PC-9 (cell line): ENCODE measurements at regions of chr16 and their contacts with region 1.

Region 1: DNA sequence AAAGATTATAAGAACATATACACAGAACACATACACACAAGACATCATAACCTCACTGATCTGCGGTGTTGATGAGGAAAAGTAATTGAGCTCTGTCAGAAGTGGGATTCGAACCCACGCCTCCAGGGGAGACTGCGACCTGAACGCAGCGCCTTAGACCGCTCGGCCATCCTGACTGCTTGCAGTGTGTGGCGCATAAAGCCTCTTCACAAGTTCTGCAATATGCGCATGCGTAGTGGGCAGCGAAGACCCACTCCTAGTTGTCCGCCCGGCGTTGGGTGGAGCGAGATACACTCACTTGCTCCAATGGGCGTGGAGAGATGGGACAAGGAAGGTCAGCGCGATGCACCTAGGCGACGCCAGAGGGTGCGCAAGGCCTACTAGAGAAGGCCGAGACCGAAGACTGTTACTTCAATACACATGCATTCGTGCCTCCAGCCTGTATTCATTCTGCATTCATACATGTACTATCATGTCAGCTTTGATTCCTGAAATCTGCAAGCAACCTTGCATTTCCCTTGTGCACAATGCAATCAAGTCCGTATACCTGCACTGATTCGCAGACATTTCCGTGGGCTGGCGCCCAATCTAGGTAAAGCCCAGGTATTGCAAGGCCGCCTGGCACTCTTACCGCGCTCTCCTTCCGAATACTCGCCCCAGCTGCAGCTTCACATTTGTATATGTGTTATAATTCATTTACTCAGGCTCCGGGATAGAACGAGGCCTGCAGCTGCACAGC is 16.1 kb upstream of the PLLP start:
- DNase-seq: peak; percentile 96 to 98
- H3K4me3 ChIP-seq: peak overlapping the region; percentile 64; the same call in 1 of the 2 replicates
- H3K27ac ChIP-seq: peak overlapping the region; percentile 67
- H3K4me1 ChIP-seq: peaks cover 31% of the 10 kb centered on the region
- H3K27me3 ChIP-seq: no peaks in the 10 kb centered on the region
- CTCF ChIP-seq: peak; percentile 92

Region 2: GRCh38 chr16:56576585-56577293 is 723.8 kb before region 1 on chr16:
- CTCF ChIA-PET with region 1: no interaction called
- POLR2A ChIA-PET with region 1: no interaction called
- intact Hi-C with region 1: loop called (anchors 5 kb)
- DNase-seq: peak; percentile 92 to 95
- H3K4me3 ChIP-seq: no peak overlapping the region
- H3K27ac ChIP-seq: peak overlapping the region; percentile 75
- H3K4me1 ChIP-seq: peaks cover 14% of the 10 kb centered on the region
- H3K27me3 ChIP-seq: no peaks in the 10 kb centered on the region
- CTCF ChIP-seq: peak; percentile 91

Region 3: GRCh38 chr16:56824331-56824730 is 476.2 kb before region 1 on chr16:
- CTCF ChIA-PET with region 1: no interaction called
- POLR2A ChIA-PET with region 1: no interaction called
- intact Hi-C with region 1: no loop called
- DNase-seq: no peak
- H3K4me3 ChIP-seq: no peak overlapping the region
- H3K27ac ChIP-seq: no peak overlapping the region
- H3K4me1 ChIP-seq: no peaks in the 10 kb centered on the region
- H3K27me3 ChIP-seq: no peaks in the 10 kb centered on the region
- CTCF ChIP-seq: no peak

Region 4: DNA sequence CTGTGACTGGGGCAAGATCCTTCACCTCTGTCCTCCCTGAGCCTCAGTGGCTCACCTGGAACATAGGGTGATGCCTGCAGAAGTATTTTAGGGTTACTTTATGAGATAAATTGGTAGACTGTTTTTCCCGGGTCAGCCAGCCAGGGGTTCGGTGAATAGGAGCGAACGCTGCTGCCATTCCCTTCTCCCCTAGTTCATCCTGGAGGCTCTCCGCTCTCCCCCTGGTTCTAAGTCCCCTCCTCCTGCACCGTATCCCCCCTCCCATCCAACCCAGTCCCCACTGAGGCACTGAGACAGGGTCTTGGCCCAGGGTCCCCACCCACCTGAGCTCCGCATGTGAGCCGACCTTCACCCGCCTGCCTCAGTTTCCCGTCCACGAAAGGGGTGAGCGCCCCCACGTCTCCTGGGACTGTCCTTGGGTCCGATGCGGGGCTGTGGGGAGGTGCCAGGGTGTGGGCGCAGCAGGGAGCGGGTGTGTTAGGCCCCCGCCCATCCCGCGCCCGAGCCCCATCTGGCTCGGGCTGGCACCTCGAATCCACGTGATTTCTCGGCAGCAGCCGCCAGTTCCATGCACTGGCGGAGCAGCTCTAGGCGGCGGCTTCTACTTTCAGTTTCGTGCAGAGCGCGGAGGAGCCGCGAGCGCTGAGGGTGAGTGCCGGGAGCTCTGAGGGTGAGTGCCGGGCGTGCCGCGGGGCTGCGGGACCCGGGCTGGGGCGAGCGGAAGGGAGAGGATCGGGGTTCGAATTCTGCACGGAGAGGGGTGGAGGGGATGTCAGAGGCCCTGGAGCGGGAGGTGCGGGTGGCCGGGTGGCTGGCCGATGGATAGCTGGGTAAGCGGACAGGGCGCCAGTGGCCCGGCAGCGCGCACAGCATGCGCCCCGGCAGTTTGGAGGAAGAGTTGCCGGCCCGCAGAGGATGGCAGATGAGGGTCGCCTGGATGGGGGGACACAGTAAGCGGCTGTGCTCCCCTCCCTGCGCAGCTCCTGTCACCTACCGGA is 311.3 kb before region 1 on chr16 and contains the start of gene NLRC5:
- CTCF ChIA-PET with region 1: no interaction called
- POLR2A ChIA-PET with region 1: no interaction called
- intact Hi-C with region 1: loop called (anchors 10 kb)
- DNase-seq: peak; percentile 74 to 76
- H3K4me3 ChIP-seq: peak within 1 kb of the TSS; percentile 66
- H3K27ac ChIP-seq: no peak within 1 kb of the TSS
- H3K4me1 ChIP-seq: peaks cover 30% of the 10 kb centered on the region
- H3K27me3 ChIP-seq: no peaks in the 10 kb centered on the region
- CTCF ChIP-seq: no peak
- total RNA-seq, gene NLRC5: 21.9 and 29.7 TPM in 2 replicates

Region 5: GRCh38 chr16:57185944-57186871 is 114.3 kb before region 1 on chr16 and contains the starts of genes PSME3IP1 and RSPRY1:
- CTCF ChIA-PET with region 1: interaction called, 7 read pairs
- POLR2A ChIA-PET with region 1: no interaction called
- intact Hi-C with region 1: loop called (anchors 1 kb)
- DNase-seq: peak; percentile 97 to 99
- H3K4me3 ChIP-seq: peak within 1 kb of the TSS; percentile 86
- H3K27ac ChIP-seq: peak within 1 kb of the TSS; percentile 64
- H3K4me1 ChIP-seq: peaks cover 44% of the 10 kb centered on the region
- H3K27me3 ChIP-seq: no peaks in the 10 kb centered on the region
- CTCF ChIP-seq: no peak
- total RNA-seq, gene PSME3IP1: 92.4 and 121 TPM in 2 replicates
- total RNA-seq, gene RSPRY1: 26.2 and 26.3 TPM in 2 replicates

Region 6: GRCh38 chr16:57277586-57277985 is 23.0 kb before region 1 on chr16:
- CTCF ChIA-PET with region 1: no interaction called
- POLR2A ChIA-PET with region 1: interaction called, 8 read pairs
- intact Hi-C with region 1: loop called (anchors 2 kb)
- DNase-seq: peak; percentile 92 to 97
- H3K4me3 ChIP-seq: no peak overlapping the region
- H3K27ac ChIP-seq: peak overlapping the region; percentile 39; the same call in 1 of the 2 replicates
- H3K4me1 ChIP-seq: peaks cover 49% of the 10 kb centered on the region
- H3K27me3 ChIP-seq: no peaks in the 10 kb centered on the region
- CTCF ChIP-seq: no peak

Region 7: GRCh38 chr16:57377080-57377841 is 76.7 kb after region 1 on chr16:
- CTCF ChIA-PET with region 1: interaction called, 3 read pairs
- POLR2A ChIA-PET with region 1: no interaction called
- intact Hi-C with region 1: loop called (anchors 1 kb)
- DNase-seq: peak; percentile 72 to 85
- H3K4me3 ChIP-seq: peak overlapping the region; percentile 11; the same call in 1 of the 2 replicates
- H3K27ac ChIP-seq: peak overlapping the region; percentile 87
- H3K4me1 ChIP-seq: peaks cover 30% of the 10 kb centered on the region
- H3K27me3 ChIP-seq: no peaks in the 10 kb centered on the region
- CTCF ChIP-seq: peak; percentile 65

Region 8: GRCh38 chr16:57432989-57433388 is 132.4 kb after region 1 on chr16:
- CTCF ChIA-PET with region 1: no interaction called
- POLR2A ChIA-PET with region 1: no interaction called
- intact Hi-C with region 1: no loop called
- DNase-seq: no peak
- H3K4me3 ChIP-seq: no peak overlapping the region
- H3K27ac ChIP-seq: no peak overlapping the region
- H3K4me1 ChIP-seq: no peaks in the 10 kb centered on the region
- H3K27me3 ChIP-seq: no peaks in the 10 kb centered on the region
- CTCF ChIP-seq: no peak

Region 9: DNA sequence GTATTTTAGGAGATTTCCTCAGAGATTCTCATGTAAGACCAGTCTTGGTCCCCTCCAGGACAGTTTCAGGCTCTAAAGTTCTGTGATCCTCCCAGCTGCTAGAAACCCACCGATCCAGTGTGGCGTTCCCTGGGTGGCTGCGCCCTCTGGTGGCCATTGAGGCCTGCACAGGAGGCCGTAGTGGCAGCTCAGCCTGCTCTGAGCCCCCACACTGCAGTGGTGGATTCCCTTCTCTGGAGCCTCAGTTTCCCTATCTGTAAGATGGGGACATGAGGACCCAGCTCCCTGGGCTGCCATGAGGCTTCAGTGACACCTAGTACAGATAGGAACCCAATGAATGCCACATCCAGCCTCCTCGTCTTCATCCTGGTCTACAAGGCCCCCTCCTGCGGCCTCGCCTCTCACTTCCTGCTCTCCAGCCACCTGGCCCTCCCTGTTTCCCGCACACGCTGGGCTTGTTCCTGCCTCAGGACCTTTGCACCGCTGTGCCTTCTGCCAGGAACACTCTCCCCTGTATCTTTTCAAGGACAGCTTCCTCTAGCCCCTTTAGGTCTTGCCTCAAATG is 219.3 kb after region 1 on chr16:
- CTCF ChIA-PET with region 1: interaction called, 4 read pairs
- POLR2A ChIA-PET with region 1: no interaction called
- intact Hi-C with region 1: loop called (anchors 1 kb)
- DNase-seq: peak in 1 of 2 experiments; percentile 64
- H3K4me3 ChIP-seq: no peak overlapping the region
- H3K27ac ChIP-seq: no peak overlapping the region
- H3K4me1 ChIP-seq: no peaks in the 10 kb centered on the region
- H3K27me3 ChIP-seq: no peaks in the 10 kb centered on the region
- CTCF ChIP-seq: peak; percentile 96